Posterior vena cava (tissue), 2 donors: ENCODE measurements at regions of chr10 and their contacts with region 1.

Region 1: GRCh38 chr10:11515596-11516430 is 95.6 kb downstream of the USP6NL start:
- DNase-seq: no peak

Region 2: DNA sequence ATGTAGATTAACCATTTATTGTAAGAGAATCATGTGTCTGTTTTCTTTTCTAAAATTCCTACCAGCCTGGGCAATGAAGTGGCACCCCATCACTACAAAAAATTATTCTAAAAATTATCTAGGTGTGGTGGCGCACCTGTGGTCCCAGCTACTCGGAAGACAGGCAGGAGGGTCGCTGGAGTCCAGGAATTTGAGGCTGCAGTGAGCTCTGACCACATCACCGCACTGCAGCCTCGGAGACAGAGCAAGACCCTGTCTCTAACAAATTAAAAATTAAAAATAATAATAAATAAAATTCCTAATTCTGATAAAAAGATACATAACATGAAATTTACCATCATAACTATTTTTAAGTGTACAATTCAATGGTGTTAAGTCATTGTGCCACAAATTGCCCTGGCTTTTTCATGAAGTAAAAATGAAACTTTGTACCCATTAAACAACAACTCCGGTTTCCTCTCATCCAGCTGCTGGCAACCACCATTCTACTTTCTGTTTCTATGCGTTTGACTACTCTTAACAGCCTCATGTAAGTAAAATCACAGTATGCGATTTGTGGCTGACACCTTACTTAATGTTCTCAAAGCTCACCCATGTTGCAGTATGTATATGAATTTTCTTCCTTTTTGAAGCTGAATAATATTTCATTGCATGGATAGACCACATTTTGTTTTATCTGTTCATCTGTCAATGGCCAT is 116.2 kb after region 1 on chr10:
- intact Hi-C with region 1: no loop called
- DNase-seq: no peak

Region 3: GRCh38 chr10:11663763-11664555 is 148.1 kb after region 1 on chr10:
- intact Hi-C with region 1: no loop called
- DNase-seq: peak; percentile 55

Region 4: GRCh38 chr10:11724938-11725776 is 209.3 kb after region 1 on chr10:
- intact Hi-C with region 1: loop called (anchors 5 kb)
- DNase-seq: no peak

Region 5: DNA sequence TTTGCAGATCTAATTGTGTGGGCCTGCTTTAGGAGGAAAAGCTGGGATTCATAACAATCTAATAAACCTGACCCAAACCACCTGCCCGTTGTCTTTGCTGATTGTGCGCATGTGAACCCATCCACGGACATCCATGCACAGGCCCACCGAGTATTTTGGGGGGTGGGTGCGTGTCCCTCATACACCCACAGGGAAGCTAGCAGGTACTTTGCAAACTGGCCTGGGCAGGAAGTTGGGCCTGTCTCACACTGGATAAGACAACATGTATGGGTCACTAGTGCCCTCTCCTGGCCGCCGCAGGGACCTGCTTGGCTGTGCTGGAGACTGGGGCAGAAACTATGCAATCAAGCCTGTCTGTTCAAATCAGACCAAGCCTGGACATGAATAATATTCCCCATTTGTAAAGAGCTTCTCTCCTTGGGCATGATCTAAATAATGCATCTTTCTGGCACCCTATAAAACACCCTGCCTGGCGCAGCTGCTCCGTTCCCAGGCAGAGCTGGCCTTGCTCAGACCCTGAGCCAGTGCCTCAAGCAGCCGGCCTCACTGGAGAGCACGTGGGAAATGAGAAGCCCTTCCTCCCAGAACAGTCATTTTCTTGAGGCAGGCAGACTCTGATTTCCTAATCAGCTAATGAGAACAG is 242.1 kb after region 1 on chr10:
- intact Hi-C with region 1: loop called (anchors 5 to 10 kb)
- DNase-seq: peak; percentile 96